ENCODE measurements at regions of chr14 and their contacts with region 1.

Region 1: GRCh38 chr14:22070119-22071011 is 396.7 kb upstream of the OR4E1 start:
- DNase-seq: peak in 13 of 14 experiments; percentile 19 to 80 (median 51)
- ATAC-seq: peak; percentile 80
- H3K4me3 ChIP-seq: peak overlapping the region; percentile 63
- H3K4me3 Mint-ChIP-seq: peak overlapping the region; percentile 97
- H3K27ac ChIP-seq: peak overlapping the region in 1 of 2 donors; percentile 48
- H3K27ac Mint-ChIP-seq: peak overlapping the region; percentile 97
- H3K4me1 ChIP-seq: peaks cover 14% of the 10 kb centered on the region
- H3K4me1 Mint-ChIP-seq: peaks cover 60% of the 10 kb centered on the region
- H3K27me3 ChIP-seq: no peaks in the 10 kb centered on the region
- H3K27me3 Mint-ChIP-seq: no peaks in the 10 kb centered on the region
- CTCF ChIP-seq: no peak

Region 2: DNA sequence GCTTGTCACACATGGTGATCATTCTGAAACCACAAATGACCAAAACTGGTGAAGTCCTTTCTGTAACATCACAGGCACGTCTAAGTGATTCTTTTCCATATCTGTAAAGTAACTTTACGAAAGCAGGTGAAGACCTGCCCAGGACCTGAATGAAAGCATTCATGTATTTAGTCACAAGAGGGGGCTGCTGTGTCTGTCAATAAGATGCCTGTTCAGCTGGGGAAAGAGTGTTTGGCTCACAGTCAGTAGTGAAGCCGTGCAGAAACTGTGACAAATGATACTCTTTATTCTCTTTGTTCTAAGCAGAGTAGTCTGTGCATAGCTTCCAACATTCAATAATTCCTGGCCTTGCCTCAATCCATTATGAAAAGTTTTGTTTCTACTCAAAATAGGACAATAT is 23.2 kb before region 1 on chr14:
- CTCF ChIA-PET with region 1: interaction called, 10 read pairs
- POLR2A ChIA-PET with region 1: interaction called, 35 read pairs
- intact Hi-C with region 1: no loop called
- DNase-seq: peak in 8 of 14 experiments; percentile 11 to 76 (median 42)
- ATAC-seq: peak; percentile 93
- H3K4me3 ChIP-seq: no peak overlapping the region
- H3K4me3 Mint-ChIP-seq: peak overlapping the region; percentile 59
- H3K27ac ChIP-seq: no peak overlapping the region
- H3K27ac Mint-ChIP-seq: peak overlapping the region; percentile 81
- H3K4me1 ChIP-seq: peaks cover 3% of the 10 kb centered on the region
- H3K4me1 Mint-ChIP-seq: peaks cover 33% of the 10 kb centered on the region
- H3K27me3 ChIP-seq: no peaks in the 10 kb centered on the region
- H3K27me3 Mint-ChIP-seq: peaks cover 3% of the 10 kb centered on the region
- CTCF ChIP-seq: peak; percentile 47

Region 3: GRCh38 chr14:22052795-22053194 is 17.6 kb before region 1 on chr14:
- CTCF ChIA-PET with region 1: interaction called, 7 read pairs
- POLR2A ChIA-PET with region 1: interaction called, 35 read pairs
- intact Hi-C with region 1: no loop called
- DNase-seq: peak in 9 of 14 experiments; percentile 7 to 52 (median 31)
- ATAC-seq: peak; percentile 77
- H3K4me3 ChIP-seq: peak overlapping the region; percentile 44
- H3K4me3 Mint-ChIP-seq: peak overlapping the region; percentile 98
- H3K27ac ChIP-seq: peak overlapping the region; percentile 23 to 24
- H3K27ac Mint-ChIP-seq: peak overlapping the region; percentile 99
- H3K4me1 ChIP-seq: no peaks in the 10 kb centered on the region
- H3K4me1 Mint-ChIP-seq: peaks cover 47% of the 10 kb centered on the region
- H3K27me3 ChIP-seq: no peaks in the 10 kb centered on the region
- H3K27me3 Mint-ChIP-seq: peaks cover 5% of the 10 kb centered on the region
- CTCF ChIP-seq: no peak

Region 4: GRCh38 chr14:22147704-22148103 is 77.3 kb after region 1 on chr14:
- CTCF ChIA-PET with region 1: no interaction called
- POLR2A ChIA-PET with region 1: no interaction called
- intact Hi-C with region 1: no loop called
- DNase-seq: peak in 4 of 14 experiments; percentile 8 to 32 (median 22)
- ATAC-seq: peak; percentile 39
- H3K4me3 ChIP-seq: peak overlapping the region; percentile 32
- H3K4me3 Mint-ChIP-seq: peak overlapping the region; percentile 72
- H3K27ac ChIP-seq: no peak overlapping the region
- H3K27ac Mint-ChIP-seq: peak overlapping the region; percentile 78
- H3K4me1 ChIP-seq: no peaks in the 10 kb centered on the region
- H3K4me1 Mint-ChIP-seq: peaks cover 6% of the 10 kb centered on the region
- H3K27me3 ChIP-seq: no peaks in the 10 kb centered on the region
- H3K27me3 Mint-ChIP-seq: no peaks in the 10 kb centered on the region
- CTCF ChIP-seq: peak; percentile 14

Region 5: DNA sequence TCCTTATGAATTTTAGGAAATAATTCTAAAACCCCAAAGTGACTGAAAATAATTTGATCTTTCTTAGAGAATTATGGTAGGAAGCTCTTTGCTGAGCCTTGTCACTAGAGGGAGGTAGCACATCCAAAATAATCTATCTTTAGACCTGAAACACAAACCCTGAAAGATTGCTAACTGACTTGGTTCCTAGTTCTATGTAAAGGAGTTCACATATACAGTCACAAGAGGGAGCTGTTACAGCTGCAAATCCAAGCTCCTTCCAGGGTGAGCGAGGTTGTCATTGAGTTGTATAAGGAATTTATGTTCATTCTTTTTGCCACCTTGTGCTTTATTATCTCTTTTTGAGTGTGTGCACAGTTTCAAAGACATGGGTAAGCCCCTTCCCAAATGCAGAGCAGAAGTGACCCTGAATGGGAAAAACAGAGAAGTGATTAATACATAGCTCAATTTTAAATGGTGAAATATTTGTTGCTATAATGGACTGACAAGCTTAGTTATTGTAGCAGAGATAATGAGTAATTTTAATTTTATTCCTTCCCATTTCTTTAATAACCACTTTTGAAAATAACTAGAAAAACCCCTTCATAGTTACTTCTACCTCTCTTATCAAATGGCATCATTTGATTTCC is 130.7 kb after region 1 on chr14:
- CTCF ChIA-PET with region 1: no interaction called
- POLR2A ChIA-PET with region 1: no interaction called
- intact Hi-C with region 1: no loop called
- DNase-seq: peak in 3 of 14 experiments; percentile 54 to 66 (median 59)
- ATAC-seq: peak; percentile 90
- H3K4me3 ChIP-seq: no peak overlapping the region
- H3K4me3 Mint-ChIP-seq: peak overlapping the region; percentile 62
- H3K27ac ChIP-seq: no peak overlapping the region
- H3K27ac Mint-ChIP-seq: no peak overlapping the region
- H3K4me1 ChIP-seq: no peaks in the 10 kb centered on the region
- H3K4me1 Mint-ChIP-seq: peaks cover 10% of the 10 kb centered on the region
- H3K27me3 ChIP-seq: no peaks in the 10 kb centered on the region
- H3K27me3 Mint-ChIP-seq: no peaks in the 10 kb centered on the region
- CTCF ChIP-seq: no peak

Measured in CD4-positive, alpha-beta T cell (primary cell).